ENCODE measurements at regions of chr12 and their contacts with region 1.

Region 1: DNA sequence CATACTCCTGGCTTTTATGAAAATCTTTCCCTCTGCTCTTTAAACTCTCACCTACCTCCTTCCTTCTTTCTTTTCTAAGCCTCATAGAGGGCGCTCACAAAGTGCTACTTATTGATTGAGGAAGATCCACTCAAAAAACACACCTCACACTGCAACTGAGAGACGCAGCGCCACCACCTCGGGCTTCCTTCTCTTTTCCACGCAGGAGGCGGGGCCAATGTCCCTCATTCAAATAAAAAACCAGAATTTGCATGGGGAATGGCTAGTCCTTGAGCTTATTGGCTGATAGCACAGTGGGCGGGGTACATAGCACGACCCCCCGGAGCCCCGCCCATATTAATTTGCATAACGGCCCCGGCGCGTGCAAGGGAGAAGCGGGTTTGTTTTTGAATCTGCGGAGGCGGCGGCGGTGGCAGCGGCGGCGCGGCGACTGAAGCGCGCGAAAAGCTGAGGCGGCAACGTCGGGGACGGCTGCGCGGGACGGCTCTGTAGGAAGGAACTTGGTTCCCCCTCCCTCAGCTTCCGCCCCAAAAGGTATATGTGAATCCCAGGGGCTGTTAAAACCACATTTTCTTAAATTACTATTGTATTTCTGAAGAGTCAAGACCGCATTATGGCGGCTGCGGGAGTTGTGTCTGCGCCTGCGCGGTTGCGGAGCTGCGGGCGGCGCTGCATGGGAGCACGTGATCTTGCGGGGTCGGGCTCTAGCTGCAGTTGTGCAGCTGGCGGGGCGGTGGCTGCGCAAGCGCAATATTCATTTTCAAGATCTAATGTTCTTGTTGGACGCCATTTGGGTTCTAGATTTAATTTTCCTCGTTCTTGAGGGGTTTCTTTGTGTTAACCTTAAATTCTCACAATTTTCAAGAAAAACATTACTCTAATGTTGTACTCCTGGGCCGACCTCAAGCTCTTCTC is at the start of gene ATF7IP:
- DNase-seq: peak; percentile 97
- total RNA-seq, gene ATF7IP: 61.6 TPM

Region 2: DNA sequence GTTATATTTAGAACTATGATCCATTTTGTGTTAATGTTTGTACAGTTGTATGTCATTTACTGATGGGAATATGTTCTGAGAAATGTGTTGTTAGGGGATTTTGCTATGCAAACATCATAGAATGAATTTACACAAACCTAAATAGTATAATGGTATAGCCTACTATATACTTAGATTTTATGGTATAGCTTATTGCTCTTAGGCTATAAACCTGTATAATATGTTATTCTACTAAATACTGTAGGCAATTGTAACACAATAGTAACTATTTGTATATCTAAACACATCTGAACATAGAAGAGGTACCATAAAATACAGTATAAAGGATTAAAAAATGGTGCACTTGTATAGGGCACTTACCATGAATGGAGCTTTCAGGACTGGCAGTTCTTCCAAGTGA is 278.7 kb before region 1 on chr12:
- intact Hi-C with region 1: no loop called
- DNase-seq: no peak

Region 3: GRCh38 chr12:14384783-14385638 is 19.5 kb after region 1 on chr12:
- intact Hi-C with region 1: loop called (anchors 2 kb)
- DNase-seq: no peak

Region 4: DNA sequence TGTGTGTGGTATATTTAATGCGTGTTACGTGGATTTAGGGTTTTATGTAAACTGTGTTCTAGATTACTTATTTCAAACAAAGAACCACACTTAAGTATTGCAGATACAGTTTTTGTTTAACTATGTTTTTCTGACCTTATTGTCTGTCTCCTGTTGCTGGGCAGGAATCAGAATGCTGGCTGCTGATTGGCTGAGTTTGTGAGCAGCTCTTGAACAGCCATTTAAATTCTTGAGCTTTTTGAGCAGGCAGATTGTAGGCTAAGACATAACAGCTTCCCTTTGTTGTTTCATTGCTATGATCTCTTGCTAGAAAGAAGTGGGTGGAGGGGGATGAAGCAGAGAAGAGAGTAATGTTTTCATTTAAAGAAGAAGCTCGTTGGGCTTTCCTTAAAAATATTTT is 52.2 kb after region 1 on chr12:
- intact Hi-C with region 1: loop called (anchors 5 kb)
- DNase-seq: peak; percentile 80

Region 5: GRCh38 chr12:14554281-14555007 is 188.9 kb after region 1 on chr12:
- intact Hi-C with region 1: loop called (anchors 10 kb)
- DNase-seq: peak; percentile 93

Measured in cardiac septum (tissue), 1 donor.